Right ventricle myocardium superior (tissue), 1 donor: ENCODE measurements at regions of chr19 and their contacts with region 1.

Region 1: DNA sequence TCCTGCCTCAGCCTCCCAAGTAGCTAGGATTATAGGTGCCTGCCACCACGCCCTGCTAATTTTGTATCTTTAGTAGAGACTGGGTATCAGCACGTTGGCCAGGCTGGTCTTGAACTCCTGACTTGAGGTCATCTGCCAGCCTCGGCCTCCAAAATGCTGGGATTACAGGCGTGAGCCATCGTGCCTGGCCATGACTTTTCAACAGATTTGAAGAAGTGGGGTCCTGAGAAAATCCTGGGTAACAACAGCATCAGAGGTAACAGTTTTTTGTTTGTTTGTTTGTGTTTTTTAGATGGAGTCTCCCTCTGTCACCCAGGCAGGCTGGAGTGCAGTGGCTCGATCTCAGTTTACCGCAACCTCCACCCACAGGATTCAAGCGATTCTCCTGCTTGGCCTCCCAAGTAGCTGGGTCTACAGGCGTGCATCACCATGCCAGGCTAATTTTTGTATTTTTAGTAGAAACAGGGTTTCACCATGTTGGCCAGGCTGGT is 3.7 kb downstream of the JUNB start:
- DNase-seq: no peak
- ATAC-seq: no peak

Region 2: GRCh38 chr19:12777217-12778016 is 17.6 kb before region 1 on chr19:
- intact Hi-C with region 1: loop called (anchors 1 kb)
- DNase-seq: peak; percentile 89
- ATAC-seq: peak; percentile 62

Region 3: DNA sequence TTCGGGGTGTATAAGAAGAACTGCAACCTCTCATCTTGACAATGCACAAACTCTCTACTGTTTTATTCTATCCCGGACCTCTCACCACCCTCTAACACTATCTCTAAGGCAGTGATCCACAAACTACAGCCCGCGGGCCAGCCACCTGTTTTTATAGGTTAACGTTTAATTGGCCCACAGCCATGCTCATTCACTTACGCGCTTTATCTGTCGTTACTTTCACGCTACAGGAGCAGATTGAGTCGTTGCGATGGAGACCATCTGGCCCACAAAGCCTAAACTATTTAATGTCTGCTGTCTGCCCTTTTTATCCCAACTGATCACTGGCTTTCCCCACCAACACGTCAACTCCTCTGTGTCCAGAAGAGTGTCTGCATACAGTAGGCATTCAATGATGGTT is 552.4 kb after region 1 on chr19:
- intact Hi-C with region 1: no loop called
- DNase-seq: no peak
- ATAC-seq: no peak